ENCODE measurements at regions of chr22 and their contacts with region 1.

Region 1: DNA sequence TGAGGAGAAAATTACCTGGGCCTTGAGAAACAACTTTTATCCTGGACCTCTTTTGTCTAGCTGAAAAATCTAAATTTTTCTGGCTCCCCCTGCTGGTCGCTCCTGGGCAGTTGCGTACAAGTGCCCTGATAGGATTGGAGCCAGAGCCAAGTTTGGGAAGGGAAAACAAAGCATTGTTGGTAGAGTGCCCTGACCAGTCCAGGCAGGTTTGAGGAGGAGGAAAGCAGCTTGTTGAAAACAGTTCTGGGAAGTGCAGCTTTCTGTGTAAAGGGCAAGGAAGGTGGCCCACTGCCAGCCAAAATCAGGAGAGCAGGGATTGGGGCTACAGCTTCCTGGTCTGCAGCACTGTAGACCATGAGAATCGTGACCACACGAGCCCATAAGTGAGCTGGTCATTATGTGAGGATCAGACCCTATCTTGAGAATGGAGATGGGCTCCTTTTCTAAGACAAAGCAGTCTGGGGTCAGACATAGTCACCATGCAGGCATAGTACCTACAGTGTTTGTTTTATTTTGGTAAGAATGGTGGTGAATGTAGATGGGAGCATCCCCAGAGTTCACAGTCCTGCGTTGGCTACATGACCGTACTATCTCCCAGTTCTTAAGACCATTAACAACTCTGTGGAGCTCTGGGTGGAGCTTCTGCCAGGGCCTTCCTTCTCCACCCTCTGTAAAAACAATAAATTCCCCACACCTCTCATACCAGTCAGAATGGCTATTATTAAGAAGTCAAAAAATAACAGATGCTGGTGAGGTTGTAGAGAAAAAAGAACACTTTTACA is 21.3 kb upstream of the PIK3IP1 start:
- DNase-seq: peak; percentile 79
- H3K4me3 Mint-ChIP-seq: no peak overlapping the region
- H3K27ac Mint-ChIP-seq: no peak overlapping the region
- H3K4me1 Mint-ChIP-seq: peaks cover 23% of the 10 kb centered on the region
- H3K27me3 Mint-ChIP-seq: no peaks in the 10 kb centered on the region

Region 2: DNA sequence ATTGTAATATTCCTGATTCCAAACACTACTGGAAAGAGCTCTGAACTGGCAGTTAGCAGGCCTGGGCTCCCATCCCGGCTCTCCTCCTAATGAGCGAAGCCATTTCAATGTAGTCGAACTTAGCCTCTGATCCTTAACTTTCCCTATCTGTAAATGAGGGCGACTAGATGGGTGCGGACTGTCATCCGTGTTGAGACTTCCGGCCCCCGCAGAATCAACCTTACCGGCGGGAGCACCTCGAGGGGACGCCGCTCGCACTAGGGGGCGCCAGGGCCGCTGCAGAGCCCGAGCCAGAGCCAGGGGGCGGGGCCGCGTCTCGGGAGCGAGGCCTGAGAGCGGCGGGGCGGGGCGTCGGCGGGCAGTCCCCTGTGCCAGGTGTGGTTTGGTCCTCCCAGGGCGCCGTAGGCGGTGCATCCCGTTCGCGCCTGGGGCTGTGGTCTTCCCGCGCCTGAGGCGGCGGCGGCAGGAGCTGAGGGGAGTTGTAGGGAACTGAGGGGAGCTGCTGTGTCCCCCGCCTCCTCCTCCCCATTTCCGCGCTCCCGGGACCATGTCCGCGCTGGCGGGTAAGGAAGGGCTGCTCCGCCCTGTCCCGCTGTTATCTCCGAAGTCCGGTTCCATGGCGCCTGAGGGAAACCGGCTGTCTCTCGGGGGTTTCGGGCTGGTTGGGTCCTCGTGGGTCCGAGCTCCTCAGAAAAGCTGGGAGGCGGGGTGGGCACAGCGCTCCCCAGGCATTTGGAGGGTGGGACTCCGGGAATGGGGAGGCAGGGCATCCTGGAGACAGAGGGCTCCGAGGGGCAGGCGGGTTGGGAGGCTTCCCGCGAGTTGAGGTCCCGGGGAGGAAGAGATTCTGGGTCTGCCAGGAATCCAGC is 101.5 kb before region 1 on chr22 and contains the start of gene LIMK2:
- CTCF ChIA-PET with region 1: interaction called, 31 read pairs
- POLR2A ChIA-PET with region 1: no interaction called
- intact Hi-C with region 1: no loop called
- DNase-seq: peak; percentile 98
- H3K4me3 Mint-ChIP-seq: peak within 1 kb of the TSS; percentile 83
- H3K27ac Mint-ChIP-seq: peak within 1 kb of the TSS; percentile 87
- H3K4me1 Mint-ChIP-seq: peaks cover 53% of the 10 kb centered on the region
- H3K27me3 Mint-ChIP-seq: no peaks in the 10 kb centered on the region
- total RNA-seq, gene LIMK2: 42.0 to 44.7 TPM

Region 3: GRCh38 chr22:31278622-31279326 is 34.8 kb before region 1 on chr22:
- CTCF ChIA-PET with region 1: interaction called, 19 read pairs
- POLR2A ChIA-PET with region 1: interaction called, 3 read pairs
- intact Hi-C with region 1: loop called (anchors 5 kb)
- DNase-seq: peak; percentile 60
- H3K4me3 Mint-ChIP-seq: no peak overlapping the region
- H3K27ac Mint-ChIP-seq: peak overlapping the region; percentile 96
- H3K4me1 Mint-ChIP-seq: peaks cover 68% of the 10 kb centered on the region
- H3K27me3 Mint-ChIP-seq: no peaks in the 10 kb centered on the region

Region 4: DNA sequence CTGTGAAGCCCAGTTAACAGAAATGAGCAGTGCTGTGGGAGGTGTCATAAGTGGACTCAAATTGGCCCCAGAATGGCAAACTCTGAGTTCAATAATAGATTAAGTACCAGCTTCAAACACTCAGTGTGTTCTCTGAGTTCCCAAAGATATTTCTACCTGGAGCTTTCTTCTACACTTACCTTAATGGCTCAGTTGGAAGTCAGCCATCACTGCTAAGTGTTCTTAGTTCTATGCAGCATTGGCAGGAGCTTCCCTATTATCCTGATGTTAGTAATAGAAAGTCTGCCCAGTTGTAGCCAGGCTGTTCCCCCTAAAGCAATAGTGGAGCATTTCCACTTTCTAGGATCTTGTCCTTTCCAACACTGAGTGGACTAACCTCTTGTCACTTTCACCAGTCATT is 11.6 kb before region 1 on chr22:
- CTCF ChIA-PET with region 1: interaction called, 92 read pairs
- POLR2A ChIA-PET with region 1: no interaction called
- intact Hi-C with region 1: no loop called
- DNase-seq: no peak
- H3K4me3 Mint-ChIP-seq: no peak overlapping the region
- H3K27ac Mint-ChIP-seq: no peak overlapping the region
- H3K4me1 Mint-ChIP-seq: peaks cover 39% of the 10 kb centered on the region
- H3K27me3 Mint-ChIP-seq: no peaks in the 10 kb centered on the region

Region 5: GRCh38 chr22:31323578-31324550 is 10.3 kb after region 1 on chr22:
- CTCF ChIA-PET with region 1: interaction called, 11 read pairs
- POLR2A ChIA-PET with region 1: no interaction called
- intact Hi-C with region 1: no loop called
- DNase-seq: no peak
- H3K4me3 Mint-ChIP-seq: no peak overlapping the region
- H3K27ac Mint-ChIP-seq: peak overlapping the region; percentile 35
- H3K4me1 Mint-ChIP-seq: peaks cover 3% of the 10 kb centered on the region
- H3K27me3 Mint-ChIP-seq: no peaks in the 10 kb centered on the region

Measured in activated CD4-positive, alpha-beta memory T cell treated with anti-CD3 and anti-CD28 coated beads for 36 hours (primary cell).